ENCODE measurements at regions of chr14 and their contacts with region 1.

Region 1: DNA sequence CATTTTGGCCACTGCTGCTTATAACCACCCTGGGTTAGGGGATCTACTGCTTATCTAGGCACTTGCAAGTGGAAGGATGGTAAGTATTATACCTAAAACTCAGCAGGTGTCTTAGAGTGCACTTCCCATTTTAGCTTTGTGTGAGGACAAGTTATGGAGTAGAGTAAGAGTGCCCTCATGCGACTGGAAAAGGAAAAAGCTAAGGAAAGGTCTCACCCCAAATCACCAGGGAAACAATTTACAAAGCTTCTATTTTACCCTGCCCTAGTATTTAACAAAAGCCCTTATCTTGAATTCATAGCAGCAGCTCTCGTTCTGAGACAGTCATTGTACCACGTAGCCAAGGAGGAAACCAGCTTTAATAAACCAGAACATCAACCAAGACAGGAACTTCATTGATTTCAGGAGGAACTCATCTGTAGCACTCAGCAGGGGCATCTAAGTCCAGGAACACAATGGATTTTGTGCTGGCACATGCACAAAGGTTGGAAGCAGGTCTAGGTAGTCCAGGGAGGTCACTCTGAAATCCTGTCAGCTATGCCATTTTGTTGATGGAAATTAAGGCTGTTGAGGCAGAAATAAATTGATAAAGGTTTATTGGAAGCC is 2.9 kb downstream of the RDH12 start:
- DNase-seq: peak in 7 of 9 donors; percentile 29 to 63 (median 52)
- ATAC-seq: peak; percentile 93
- H3K4me3 ChIP-seq: no peak overlapping the region
- H3K4me3 Mint-ChIP-seq: no peak overlapping the region
- H3K27ac ChIP-seq: no peak overlapping the region
- H3K27ac Mint-ChIP-seq: peak overlapping the region in 1 of 9 donors; percentile 38
- H3K4me1 ChIP-seq: no peaks in the 10 kb centered on the region
- H3K4me1 Mint-ChIP-seq: peaks cover 0 to 2% (median 0%) of the 10 kb centered on the region in 7 donors
- H3K27me3 ChIP-seq: no peaks in the 10 kb centered on the region
- H3K27me3 Mint-ChIP-seq: peaks cover 0 to 8% (median 0%) of the 10 kb centered on the region in 5 donors

Region 2: GRCh38 chr14:67426983-67427606 is 277.5 kb before region 1 on chr14:
- CTCF ChIA-PET with region 1: interaction called, 20 read pairs
- POLR2A ChIA-PET with region 1: no interaction called
- intact Hi-C with region 1: loop called (anchors 1 kb)
- DNase-seq: peak; percentile 55 to 81 (median 74)
- ATAC-seq: peak; percentile 91
- H3K4me3 ChIP-seq: no peak overlapping the region
- H3K4me3 Mint-ChIP-seq: no peak overlapping the region
- H3K27ac ChIP-seq: no peak overlapping the region
- H3K27ac Mint-ChIP-seq: no peak overlapping the region
- H3K4me1 ChIP-seq: no peaks in the 10 kb centered on the region
- H3K4me1 Mint-ChIP-seq: peaks cover 0 to 8% (median 0%) of the 10 kb centered on the region in 7 donors
- H3K27me3 ChIP-seq: no peaks in the 10 kb centered on the region
- H3K27me3 Mint-ChIP-seq: peaks cover 6 to 36% (median 16%) of the 10 kb centered on the region in 5 donors

Region 3: GRCh38 chr14:67571272-67571850 is 133.2 kb before region 1 on chr14:
- CTCF ChIA-PET with region 1: interaction called, 12 read pairs
- POLR2A ChIA-PET with region 1: no interaction called
- intact Hi-C with region 1: no loop called
- DNase-seq: peak; percentile 44 to 76 (median 64)
- ATAC-seq: peak; percentile 87
- H3K4me3 ChIP-seq: no peak overlapping the region
- H3K4me3 Mint-ChIP-seq: no peak overlapping the region
- H3K27ac ChIP-seq: no peak overlapping the region
- H3K27ac Mint-ChIP-seq: peak overlapping the region in 1 of 9 donors; percentile 32
- H3K4me1 ChIP-seq: no peaks in the 10 kb centered on the region
- H3K4me1 Mint-ChIP-seq: peaks cover 0 to 18% (median 0%) of the 10 kb centered on the region in 7 donors
- H3K27me3 ChIP-seq: no peaks in the 10 kb centered on the region
- H3K27me3 Mint-ChIP-seq: peaks cover 0 to 13% (median 5%) of the 10 kb centered on the region in 5 donors

Region 4: GRCh38 chr14:67666750-67667449 is 37.7 kb before region 1 on chr14:
- CTCF ChIA-PET with region 1: interaction called, 5 read pairs
- POLR2A ChIA-PET with region 1: no interaction called
- intact Hi-C with region 1: loop called (anchors 1 to 2 kb)
- DNase-seq: peak in 7 of 9 donors; percentile 43 to 64 (median 52)
- ATAC-seq: peak; percentile 88
- H3K4me3 ChIP-seq: no peak overlapping the region
- H3K4me3 Mint-ChIP-seq: peak overlapping the region in 2 of 10 donors; percentile 21 to 23
- H3K27ac ChIP-seq: no peak overlapping the region
- H3K27ac Mint-ChIP-seq: peak overlapping the region; percentile 14 to 88 (median 58)
- H3K4me1 ChIP-seq: peaks cover 5 to 7% of the 10 kb centered on the region in 2 donors
- H3K4me1 Mint-ChIP-seq: peaks cover 32 to 75% (median 63%) of the 10 kb centered on the region in 7 donors
- H3K27me3 ChIP-seq: no peaks in the 10 kb centered on the region
- H3K27me3 Mint-ChIP-seq: no peaks in the 10 kb centered on the region